Ascending aorta (tissue), 2 donors: ENCODE measurements at regions of chr3 and their contacts with region 1.

Region 1: GRCh38 chr3:197959898-197960693 is at the start of gene LMLN:
- DNase-seq: peak; percentile 86 to 97
- H3K4me3 ChIP-seq: peak within 1 kb of the TSS; percentile 66 to 88
- H3K27ac ChIP-seq: peak within 1 kb of the TSS; percentile 75 to 82
- H3K4me1 ChIP-seq: peaks cover 0 to 9% of the 10 kb centered on the region in 2 donors
- H3K27me3 ChIP-seq: no peaks in the 10 kb centered on the region
- CTCF ChIP-seq: no peak
- total RNA-seq, gene LMLN: 0.32 TPM

Region 2: DNA sequence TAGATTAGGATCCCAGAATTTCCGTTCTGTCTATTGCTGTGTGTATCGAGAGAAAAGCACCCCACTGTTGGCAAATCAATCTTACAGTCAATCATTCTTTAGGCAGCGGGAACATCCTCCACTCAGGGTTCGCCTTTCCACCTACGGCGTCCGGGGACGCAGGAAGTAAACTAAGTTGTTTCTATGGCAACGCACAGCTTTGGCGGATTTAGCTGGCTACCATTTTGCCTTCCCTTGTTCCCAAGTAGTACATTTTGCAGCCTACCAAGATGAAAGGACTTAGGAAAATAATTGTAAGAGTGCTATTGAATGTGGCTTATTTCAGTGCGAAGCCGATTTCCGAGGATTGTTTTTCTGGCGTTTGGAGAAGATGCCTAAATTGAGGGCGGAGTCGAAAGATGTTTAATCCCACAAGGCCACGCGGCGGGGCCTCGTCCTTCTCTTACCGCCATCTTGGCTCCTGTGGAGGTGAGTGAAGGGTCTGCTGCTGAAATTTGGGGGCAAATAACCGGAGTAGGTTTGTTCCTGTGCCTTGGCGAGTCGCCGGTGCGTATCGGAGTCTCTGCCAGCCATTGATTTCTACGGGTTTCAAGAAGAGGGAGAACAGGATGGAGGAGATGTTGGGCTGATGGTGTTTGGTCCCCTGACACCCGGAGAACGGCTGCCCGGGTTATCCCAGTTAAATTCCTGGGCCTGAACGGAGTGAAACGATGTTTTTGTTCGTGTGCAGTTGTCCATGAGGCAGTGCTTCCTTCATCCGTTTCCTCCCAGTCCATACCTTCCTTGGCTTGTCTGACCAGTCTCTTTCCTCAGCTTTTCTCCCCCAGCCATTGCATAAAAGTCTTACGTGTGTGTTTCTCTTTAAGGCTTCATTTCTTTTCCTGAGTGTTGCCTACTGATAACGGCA is 10.1 kb before region 1 on chr3 and contains the start of gene RPL35A:
- intact Hi-C with region 1: loop called (anchors 1 kb)
- DNase-seq: peak; percentile 25 to 93
- H3K4me3 ChIP-seq: peak within 1 kb of the TSS; percentile 62 to 71
- H3K27ac ChIP-seq: peak within 1 kb of the TSS; percentile 86 to 87
- H3K4me1 ChIP-seq: peaks cover 12 to 34% of the 10 kb centered on the region in 2 donors
- H3K27me3 ChIP-seq: no peaks in the 10 kb centered on the region
- CTCF ChIP-seq: no peak
- total RNA-seq, gene RPL35A: 291 TPM